MCF 10A (cell line): ENCODE measurements at regions of chr7 and their contacts with region 1.

Region 1: GRCh38 chr7:112869111-112869757 is 79.0 kb upstream of the TMEM168 start:
- DNase-seq: peak; percentile 73
- H3K4me3 Mint-ChIP-seq: no peak overlapping the region
- H3K27ac Mint-ChIP-seq: no peak overlapping the region
- H3K4me1 Mint-ChIP-seq: peaks cover 5% of the 10 kb centered on the region
- H3K27me3 Mint-ChIP-seq: no peaks in the 10 kb centered on the region
- CTCF ChIP-seq: peak; percentile 93

Region 2: DNA sequence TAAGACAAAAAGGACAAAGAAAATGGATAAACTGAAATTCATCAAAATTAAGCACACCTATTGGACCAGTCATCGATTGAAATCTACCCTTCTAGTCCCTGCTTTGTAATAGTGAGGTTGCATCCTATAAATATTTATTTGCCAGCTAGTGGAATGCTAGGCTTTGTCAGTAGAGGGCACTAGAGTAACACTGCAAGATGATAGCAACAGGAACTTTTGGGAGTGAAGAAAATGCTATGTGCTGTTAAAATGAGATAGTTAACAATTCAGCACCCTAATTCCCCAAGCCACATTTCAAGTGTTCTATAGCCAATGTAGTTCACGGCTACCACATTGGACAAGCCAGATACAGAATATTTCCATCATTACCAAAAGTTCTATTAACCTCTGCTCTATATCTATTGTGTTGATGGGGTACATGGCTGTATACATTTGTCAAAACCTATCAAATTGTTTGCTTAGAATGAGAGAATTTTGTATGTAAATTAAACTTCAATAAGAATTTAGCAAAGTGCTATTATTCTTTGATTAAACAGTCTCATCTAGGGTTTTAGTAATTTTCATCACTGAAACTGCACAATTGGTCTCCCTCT is 318.7 kb before region 1 on chr7:
- CTCF ChIA-PET with region 1: interaction called, 12 read pairs
- POLR2A ChIA-PET with region 1: no interaction called
- intact Hi-C with region 1: loop called (anchors 1 kb)
- DNase-seq: peak; percentile 72
- H3K4me3 Mint-ChIP-seq: no peak overlapping the region
- H3K27ac Mint-ChIP-seq: no peak overlapping the region
- H3K4me1 Mint-ChIP-seq: no peaks in the 10 kb centered on the region
- H3K27me3 Mint-ChIP-seq: no peaks in the 10 kb centered on the region
- CTCF ChIP-seq: peak; percentile 95

Region 3: DNA sequence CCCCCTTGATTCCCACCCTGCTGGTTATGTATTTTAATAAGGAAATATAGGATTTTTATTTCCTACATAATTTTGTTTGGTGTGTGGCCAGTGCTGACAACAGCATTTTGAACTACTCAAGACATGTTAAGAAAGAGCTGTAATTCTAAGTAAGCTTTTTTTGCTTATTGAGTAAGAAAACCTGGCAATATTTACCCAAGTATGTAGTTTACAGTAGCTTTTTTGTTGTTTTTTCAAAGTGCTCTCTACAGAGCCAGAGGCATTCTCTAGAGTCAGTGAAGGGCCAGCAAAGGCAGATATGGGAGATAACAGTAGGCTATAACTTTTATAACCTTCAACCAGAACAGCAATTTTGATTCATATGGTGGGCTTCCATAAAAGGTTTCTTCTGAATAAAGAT is 15.8 kb before region 1 on chr7:
- CTCF ChIA-PET with region 1: interaction called, 17 read pairs
- POLR2A ChIA-PET with region 1: interaction called, 4 read pairs
- intact Hi-C with region 1: no loop called
- DNase-seq: no peak
- H3K4me3 Mint-ChIP-seq: no peak overlapping the region
- H3K27ac Mint-ChIP-seq: no peak overlapping the region
- H3K4me1 Mint-ChIP-seq: no peaks in the 10 kb centered on the region
- H3K27me3 Mint-ChIP-seq: no peaks in the 10 kb centered on the region
- CTCF ChIP-seq: no peak

Region 4: GRCh38 chr7:112880818-112881418 is 11.7 kb after region 1 on chr7:
- CTCF ChIA-PET with region 1: interaction called, 27 read pairs
- POLR2A ChIA-PET with region 1: interaction called, 3 read pairs
- intact Hi-C with region 1: no loop called
- DNase-seq: no peak
- H3K4me3 Mint-ChIP-seq: no peak overlapping the region
- H3K27ac Mint-ChIP-seq: no peak overlapping the region
- H3K4me1 Mint-ChIP-seq: no peaks in the 10 kb centered on the region
- H3K27me3 Mint-ChIP-seq: no peaks in the 10 kb centered on the region
- CTCF ChIP-seq: no peak

Region 5: DNA sequence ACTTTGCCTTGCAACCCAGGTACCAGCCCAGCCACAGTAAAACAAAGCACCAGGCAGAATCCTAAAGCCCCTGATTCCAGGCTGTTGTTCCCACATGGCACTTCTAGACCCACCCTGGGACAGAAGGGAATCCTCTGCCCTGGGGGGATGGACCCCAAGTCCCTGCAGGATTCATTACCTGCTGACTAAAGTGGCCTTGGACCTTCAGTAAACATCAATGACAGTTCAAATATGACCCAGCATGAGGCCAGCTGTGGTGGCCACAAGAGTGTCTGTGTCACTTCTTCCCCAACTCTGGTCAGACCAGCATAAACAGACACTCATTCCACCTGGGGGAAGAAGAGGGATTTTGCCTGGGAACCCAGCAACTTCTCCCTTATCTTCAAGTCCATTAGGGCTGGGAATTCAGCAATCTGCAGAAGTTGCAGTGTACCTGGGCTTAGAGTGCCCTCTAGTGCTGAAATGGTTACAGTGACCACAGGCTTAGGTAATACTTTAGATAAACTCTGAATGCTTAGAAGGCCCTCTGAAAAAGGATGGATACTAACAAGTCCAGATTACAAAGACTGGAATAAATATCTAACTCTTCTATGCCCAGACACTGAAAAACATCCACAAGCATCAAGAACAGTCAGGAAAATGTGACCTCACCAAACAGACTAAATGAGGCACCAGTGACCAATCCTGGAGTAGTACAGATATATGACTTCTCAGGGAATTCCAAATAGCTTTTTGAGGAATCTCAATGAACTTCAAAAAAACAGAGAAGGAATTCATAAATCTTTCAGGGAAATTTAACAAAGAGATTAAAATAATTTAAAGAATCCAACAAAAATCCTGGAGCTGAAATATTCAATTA is 29.4 kb after region 1 on chr7:
- CTCF ChIA-PET with region 1: interaction called, 11 read pairs
- POLR2A ChIA-PET with region 1: no interaction called
- intact Hi-C with region 1: no loop called
- DNase-seq: peak; percentile 78
- H3K4me3 Mint-ChIP-seq: no peak overlapping the region
- H3K27ac Mint-ChIP-seq: peak overlapping the region; percentile 19
- H3K4me1 Mint-ChIP-seq: no peaks in the 10 kb centered on the region
- H3K27me3 Mint-ChIP-seq: no peaks in the 10 kb centered on the region
- CTCF ChIP-seq: peak; percentile 80

Region 6: DNA sequence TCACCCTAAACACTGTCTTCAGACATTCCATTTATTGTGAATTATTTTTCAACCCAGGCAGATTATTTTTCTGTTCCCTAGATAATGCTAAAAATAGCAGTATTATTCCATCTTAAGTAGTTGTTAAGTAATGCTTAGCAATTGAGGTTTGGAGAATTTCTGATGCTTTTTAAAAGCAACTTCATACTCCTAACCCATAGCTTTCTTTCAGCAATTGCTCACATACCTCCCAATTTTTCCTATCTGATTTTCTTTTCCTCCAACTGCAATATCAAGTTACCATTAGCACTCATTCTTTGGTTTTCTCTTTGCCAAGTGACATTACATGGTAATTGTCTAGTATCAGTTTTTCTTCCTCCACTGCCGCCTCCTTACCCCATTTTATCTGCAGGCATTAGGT is 112.7 kb after region 1 on chr7:
- CTCF ChIA-PET with region 1: no interaction called
- POLR2A ChIA-PET with region 1: no interaction called
- intact Hi-C with region 1: no loop called
- DNase-seq: no peak
- H3K4me3 Mint-ChIP-seq: no peak overlapping the region
- H3K27ac Mint-ChIP-seq: no peak overlapping the region
- H3K4me1 Mint-ChIP-seq: peaks cover 18% of the 10 kb centered on the region
- H3K27me3 Mint-ChIP-seq: no peaks in the 10 kb centered on the region
- CTCF ChIP-seq: no peak